Left colon (tissue), 2 donors: ENCODE measurements at regions of chr6 and their contacts with region 1.

Region 1: GRCh38 chr6:111478749-111479148 is 4.3 kb downstream of the REV3L start:
- DNase-seq: no peak
- ATAC-seq: peak; percentile 28

Region 2: GRCh38 chr6:110456694-110457093 is 1022.1 kb before region 1 on chr6:
- intact Hi-C with region 1: no loop called
- DNase-seq: no peak
- ATAC-seq: no peak

Region 3: DNA sequence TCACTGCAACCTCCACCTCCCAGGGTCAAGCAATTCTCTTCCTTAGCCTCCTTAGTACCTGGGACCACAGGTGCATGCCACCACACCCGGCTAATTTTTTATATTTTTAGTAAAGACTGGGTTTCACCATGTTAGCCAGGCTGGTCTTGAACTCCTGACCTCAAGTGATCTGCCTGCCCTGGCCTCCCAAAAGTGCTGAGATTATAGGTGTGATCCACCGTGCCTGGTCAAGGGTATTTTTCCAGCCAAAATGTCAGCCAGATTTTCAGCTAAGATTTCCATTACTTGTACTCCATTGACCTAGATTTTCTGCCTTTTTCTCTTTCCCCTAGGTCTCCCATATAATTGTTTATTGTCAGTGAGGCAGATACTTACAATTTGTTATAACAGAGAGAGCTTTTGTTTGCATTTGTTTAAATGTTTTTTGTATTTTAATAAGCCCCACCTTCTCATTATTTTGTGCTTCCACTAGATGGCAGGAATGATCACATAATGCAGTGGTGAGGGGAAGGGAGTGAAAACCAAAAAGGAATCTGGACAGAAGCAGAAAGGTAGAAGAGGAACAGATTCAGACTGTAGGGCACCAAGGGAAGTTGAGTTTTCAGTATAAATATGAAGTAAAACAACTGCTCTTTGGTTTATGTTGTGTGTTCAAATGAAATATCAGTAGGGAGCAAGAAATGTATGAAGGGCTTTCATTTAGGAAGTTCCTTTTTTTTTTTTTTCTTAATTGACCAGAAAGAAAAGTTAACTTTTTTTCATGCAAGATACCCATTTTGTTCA is 467.2 kb before region 1 on chr6:
- intact Hi-C with region 1: no loop called
- DNase-seq: no peak
- ATAC-seq: peak; percentile 70

Region 4: GRCh38 chr6:111259089-111259831 is 219.5 kb before region 1 on chr6:
- intact Hi-C with region 1: loop called in 1 of 2 experiments (anchors 10 kb)
- DNase-seq: peak; percentile 98 to 99
- ATAC-seq: peak; percentile 96

Region 5: DNA sequence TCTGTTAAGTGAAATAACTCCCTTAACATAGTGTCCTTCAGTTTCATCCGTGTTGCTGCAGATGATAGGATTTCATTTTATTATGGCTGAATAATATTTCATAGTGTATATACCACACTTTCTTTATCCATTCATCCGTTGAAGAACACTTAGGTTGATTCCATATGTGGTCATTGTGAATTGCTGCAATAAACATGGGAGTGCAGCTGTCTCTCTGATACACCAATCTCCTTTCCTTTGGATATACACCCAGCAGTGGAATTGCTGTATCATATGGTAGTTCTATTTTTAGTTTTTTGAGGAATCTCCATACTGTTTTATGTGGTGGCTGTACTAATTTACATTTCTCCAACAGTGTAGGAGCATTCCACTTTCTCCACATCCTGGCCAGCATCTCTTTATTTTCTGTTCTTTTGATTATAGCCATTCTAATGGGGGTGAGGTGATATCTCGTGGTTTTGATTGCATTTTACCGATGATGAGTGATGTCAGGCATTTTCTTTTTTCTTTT is 198.2 kb before region 1 on chr6:
- intact Hi-C with region 1: no loop called
- DNase-seq: no peak
- ATAC-seq: peak; percentile 93

Region 6: DNA sequence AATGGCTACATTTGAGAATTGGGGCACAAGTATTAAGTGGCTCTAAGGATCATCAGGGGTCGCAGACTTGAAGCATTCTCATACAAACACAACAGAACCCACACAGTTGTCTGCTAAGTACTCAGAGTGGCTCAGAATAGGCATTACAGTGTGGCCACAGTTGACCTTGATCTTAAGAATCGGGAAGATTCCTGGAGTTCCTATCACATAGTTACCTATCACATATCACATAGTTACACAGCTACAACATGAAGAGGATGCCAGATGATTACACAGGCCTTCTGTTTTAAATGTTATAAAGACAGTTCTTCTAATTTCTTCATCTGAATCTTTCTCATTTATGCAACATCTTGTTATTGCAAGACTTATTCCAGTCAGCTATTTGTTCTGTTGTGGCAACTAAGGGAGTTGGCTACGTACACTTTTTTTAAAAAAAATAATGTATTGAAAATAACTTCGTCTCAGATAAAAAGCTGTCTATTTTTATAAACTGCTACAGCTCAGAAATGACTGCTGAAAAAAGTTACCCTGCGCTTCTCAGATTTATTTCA is 124.8 kb before region 1 on chr6:
- intact Hi-C with region 1: loop called in 1 of 2 experiments (anchors 10 kb)
- DNase-seq: no peak
- ATAC-seq: no peak